ENCODE measurements at regions of chr4 and their contacts with region 1.

Region 1: DNA sequence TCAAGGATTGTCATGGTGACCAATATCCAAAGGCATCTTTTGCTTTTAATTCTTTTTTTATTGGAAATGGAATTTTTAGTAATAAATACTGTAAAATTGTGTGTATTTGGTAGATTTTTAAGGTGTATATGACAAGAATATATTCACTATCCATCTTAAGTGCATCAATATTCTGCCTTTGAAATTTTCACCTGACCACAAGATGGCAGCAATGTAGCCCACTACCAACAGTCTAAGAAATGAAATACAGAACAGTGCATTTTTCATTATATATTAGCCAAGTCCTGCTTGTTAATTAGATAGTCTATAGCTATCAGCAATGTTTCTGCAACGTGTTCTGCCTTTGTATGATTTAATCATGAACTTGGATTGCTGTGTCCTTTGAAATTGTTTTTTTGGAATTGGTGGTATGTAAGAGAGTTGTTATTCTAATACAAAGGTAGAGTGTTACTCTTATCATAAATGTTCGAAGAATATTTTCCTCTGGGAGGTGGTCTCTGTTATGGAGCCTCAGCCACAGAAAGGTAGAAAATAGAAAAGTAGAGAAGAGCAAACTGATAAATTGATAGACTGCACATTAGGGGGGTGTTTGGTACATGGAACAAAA is 38.2 kb downstream of the HPGDS start:
- DNase-seq: peak; percentile 21
- ATAC-seq: peak; percentile 79
- H3K4me3 ChIP-seq: no peak overlapping the region
- H3K27ac ChIP-seq: no peak overlapping the region
- H3K4me1 ChIP-seq: peaks cover 19% of the 10 kb centered on the region
- H3K27me3 ChIP-seq: no peaks in the 10 kb centered on the region
- CTCF ChIP-seq: peak; percentile 69
- EP300 ChIP-seq: no peak
- POLR2A ChIP-seq: no peak
- RAD21 ChIP-seq: peak; percentile 52; the same call in 1 of the 2 replicates

Region 2: GRCh38 chr4:92760433-92760832 is 1544.0 kb before region 1 on chr4:
- CTCF ChIA-PET with region 1: no interaction called
- POLR2A ChIA-PET with region 1: no interaction called
- in situ Hi-C with region 1: no loop called
- intact Hi-C with region 1: no loop called
- DNase-seq: no peak
- ATAC-seq: no peak
- H3K4me3 ChIP-seq: no peak overlapping the region
- H3K27ac ChIP-seq: no peak overlapping the region
- H3K4me1 ChIP-seq: no peaks in the 10 kb centered on the region
- H3K27me3 ChIP-seq: no peaks in the 10 kb centered on the region
- CTCF ChIP-seq: no peak
- EP300 ChIP-seq: no peak
- POLR2A ChIP-seq: no peak
- RAD21 ChIP-seq: no peak

Region 3: GRCh38 chr4:94390804-94391410 is 86.4 kb after region 1 on chr4:
- CTCF ChIA-PET with region 1: interaction called, 10 read pairs
- POLR2A ChIA-PET with region 1: no interaction called
- in situ Hi-C with region 1: loop called (anchors 10 kb)
- intact Hi-C with region 1: loop called (anchors 1 kb)
- DNase-seq: peak; percentile 20
- ATAC-seq: peak; percentile 45; the same call in 2 of the 3 replicates
- H3K4me3 ChIP-seq: no peak overlapping the region
- H3K27ac ChIP-seq: no peak overlapping the region
- H3K4me1 ChIP-seq: no peaks in the 10 kb centered on the region
- H3K27me3 ChIP-seq: 0 out of 5 replicates have a peak, but pooled peaks cover 0 to 6% of the 10 kb centered on the region in 2 experiments
- CTCF ChIP-seq: peak; percentile 58
- EP300 ChIP-seq: no peak
- POLR2A ChIP-seq: no peak
- RAD21 ChIP-seq: peak; percentile 21; the same call in 1 of the 2 replicates

Region 4: GRCh38 chr4:94451695-94452475 is 147.4 kb after region 1 on chr4 and contains the start of gene PDLIM5:
- CTCF ChIA-PET with region 1: no interaction called
- POLR2A ChIA-PET with region 1: no interaction called
- in situ Hi-C with region 1: no loop called
- intact Hi-C with region 1: no loop called
- DNase-seq: peak; percentile 80
- ATAC-seq: peak; percentile 89
- H3K4me3 ChIP-seq: peak within 1 kb of the TSS; percentile 90 to 96 (median 93)
- H3K27ac ChIP-seq: peak within 1 kb of the TSS; percentile 91
- H3K4me1 ChIP-seq: peaks cover 63% of the 10 kb centered on the region
- H3K27me3 ChIP-seq: no peaks in the 10 kb centered on the region; a peak in 1 of 5 replicates
- CTCF ChIP-seq: peak; percentile 38; the same call in 1 of the 2 replicates
- EP300 ChIP-seq: no peak
- POLR2A ChIP-seq: peak; percentile 79 to 94
- RAD21 ChIP-seq: no peak; the same call in none of the 2 replicates
- total RNA-seq, gene PDLIM5: 52.8 and 70.2 TPM in 2 replicates

Region 5: DNA sequence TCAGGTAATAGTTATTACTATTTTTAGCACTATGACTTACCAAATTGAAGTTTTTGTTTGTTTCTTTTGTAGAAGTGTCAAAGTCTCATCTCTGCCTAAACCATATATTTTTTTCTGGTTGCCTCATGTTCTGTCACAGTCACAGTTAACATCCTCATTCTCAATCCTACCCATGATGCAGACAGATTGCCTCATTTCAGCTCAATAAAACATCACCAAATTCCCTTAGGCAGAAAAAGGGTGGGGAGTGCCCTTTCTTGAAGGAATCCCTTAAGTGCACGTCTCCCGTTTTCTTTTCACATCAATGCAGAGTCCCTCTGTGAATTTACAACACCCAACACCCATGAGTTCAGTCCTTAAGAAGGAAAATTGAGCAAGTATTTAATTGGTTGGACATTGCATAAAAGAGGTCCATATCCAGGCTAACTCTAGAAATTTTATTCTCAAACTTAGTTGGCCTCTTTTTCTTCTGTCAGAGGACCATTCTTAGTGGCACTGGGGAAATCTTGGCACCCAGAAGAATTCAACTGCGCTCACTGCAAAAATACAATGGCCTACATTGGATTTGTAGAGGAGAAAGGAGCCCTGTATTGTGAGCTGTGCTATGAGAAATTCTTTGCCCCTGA is 349.6 kb after region 1 on chr4:
- CTCF ChIA-PET with region 1: no interaction called
- POLR2A ChIA-PET with region 1: no interaction called
- in situ Hi-C with region 1: no loop called
- intact Hi-C with region 1: no loop called
- DNase-seq: no peak
- ATAC-seq: no peak
- H3K4me3 ChIP-seq: no peak overlapping the region
- H3K27ac ChIP-seq: no peak overlapping the region
- H3K4me1 ChIP-seq: no peaks in the 10 kb centered on the region
- H3K27me3 ChIP-seq: no peaks in the 10 kb centered on the region
- CTCF ChIP-seq: no peak
- EP300 ChIP-seq: no peak
- POLR2A ChIP-seq: no peak
- RAD21 ChIP-seq: no peak

Measured in HepG2 (cell line).